ENCODE measurements at regions of chr13 and their contacts with region 1.

Region 1: DNA sequence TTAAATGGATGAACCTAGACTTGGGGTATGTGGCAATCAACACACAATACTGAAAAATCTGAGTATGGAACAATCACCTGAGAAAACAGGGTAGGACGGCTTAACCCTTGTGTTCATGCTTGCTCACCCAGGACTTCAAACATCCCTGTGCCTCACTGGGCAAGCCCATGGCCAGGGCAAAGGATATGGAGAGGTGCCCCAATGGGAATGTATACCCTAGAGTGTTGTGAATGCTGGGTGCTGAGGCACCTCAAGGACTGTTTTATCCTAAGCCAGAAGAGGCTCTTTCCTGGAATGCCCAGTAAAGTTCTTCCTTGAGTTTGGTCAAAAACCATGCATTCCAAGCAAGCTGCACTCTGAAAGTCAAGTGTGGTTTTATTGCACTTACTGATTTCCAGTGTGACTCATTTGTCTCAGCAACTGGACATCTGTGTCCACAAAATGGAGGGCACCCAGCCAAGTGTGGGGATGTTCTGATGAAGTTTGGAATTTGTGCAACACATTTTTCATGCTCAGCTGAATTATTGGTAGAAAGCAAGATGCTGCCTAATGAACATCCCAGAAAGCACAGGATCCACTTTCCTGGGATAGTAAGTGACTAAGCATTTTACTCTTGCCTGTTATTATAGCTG is 531.3 kb downstream of the RFC3 start:
- DNase-seq: peak; percentile 68 to 91
- H3K4me3 ChIP-seq: no peak overlapping the region
- H3K27ac ChIP-seq: peak overlapping the region; percentile 88
- H3K4me1 ChIP-seq: peaks cover 50% of the 10 kb centered on the region
- H3K27me3 ChIP-seq: no peaks in the 10 kb centered on the region
- CTCF ChIP-seq: no peak

Region 2: DNA sequence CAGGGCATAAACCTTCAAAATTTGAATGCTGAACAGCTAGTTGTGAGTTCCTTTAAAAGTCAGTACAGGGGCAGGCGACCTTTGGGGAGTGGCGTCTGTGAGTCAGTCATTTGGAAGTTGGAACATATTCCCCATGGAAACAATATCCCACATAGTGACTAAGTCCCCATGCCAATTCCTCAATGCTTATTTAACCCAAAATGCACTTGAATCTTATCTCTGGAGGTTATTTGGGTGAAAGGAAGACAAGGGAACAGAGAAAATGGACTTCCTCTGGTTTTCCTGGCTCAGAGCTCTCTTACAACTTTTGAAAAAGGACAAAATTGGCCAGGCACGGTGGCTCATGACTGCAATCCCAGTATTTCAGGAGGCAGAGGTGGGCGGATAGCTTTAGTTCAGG is 113.6 kb after region 1 on chr13:
- CTCF ChIA-PET with region 1: no interaction called
- POLR2A ChIA-PET with region 1: no interaction called
- intact Hi-C with region 1: loop called (anchors 5 kb)
- DNase-seq: peak; percentile 65 to 90
- H3K4me3 ChIP-seq: 0 out of 2 replicates have a peak overlapping the region, but pooled peaks have one; percentile 7
- H3K27ac ChIP-seq: peak overlapping the region; percentile 78
- H3K4me1 ChIP-seq: peaks cover 29% of the 10 kb centered on the region
- H3K27me3 ChIP-seq: no peaks in the 10 kb centered on the region
- CTCF ChIP-seq: no peak

Region 3: GRCh38 chr13:34941835-34942731 is 592.9 kb after region 1 on chr13 and contains the start of gene NBEA:
- CTCF ChIA-PET with region 1: no interaction called
- POLR2A ChIA-PET with region 1: no interaction called
- intact Hi-C with region 1: loop called (anchors 10 kb)
- DNase-seq: peak; percentile 82 to 83
- H3K4me3 ChIP-seq: peak within 1 kb of the TSS; percentile 71
- H3K27ac ChIP-seq: no peak within 1 kb of the TSS
- H3K4me1 ChIP-seq: peaks cover 39% of the 10 kb centered on the region
- H3K27me3 ChIP-seq: no peaks in the 10 kb centered on the region
- CTCF ChIP-seq: peak; percentile 45; the same call in 1 of the 2 replicates
- total RNA-seq, gene NBEA: 4.0 and 4.5 TPM in 2 replicates